ENCODE measurements at regions of chr1 and their contacts with region 1.

Region 1: DNA sequence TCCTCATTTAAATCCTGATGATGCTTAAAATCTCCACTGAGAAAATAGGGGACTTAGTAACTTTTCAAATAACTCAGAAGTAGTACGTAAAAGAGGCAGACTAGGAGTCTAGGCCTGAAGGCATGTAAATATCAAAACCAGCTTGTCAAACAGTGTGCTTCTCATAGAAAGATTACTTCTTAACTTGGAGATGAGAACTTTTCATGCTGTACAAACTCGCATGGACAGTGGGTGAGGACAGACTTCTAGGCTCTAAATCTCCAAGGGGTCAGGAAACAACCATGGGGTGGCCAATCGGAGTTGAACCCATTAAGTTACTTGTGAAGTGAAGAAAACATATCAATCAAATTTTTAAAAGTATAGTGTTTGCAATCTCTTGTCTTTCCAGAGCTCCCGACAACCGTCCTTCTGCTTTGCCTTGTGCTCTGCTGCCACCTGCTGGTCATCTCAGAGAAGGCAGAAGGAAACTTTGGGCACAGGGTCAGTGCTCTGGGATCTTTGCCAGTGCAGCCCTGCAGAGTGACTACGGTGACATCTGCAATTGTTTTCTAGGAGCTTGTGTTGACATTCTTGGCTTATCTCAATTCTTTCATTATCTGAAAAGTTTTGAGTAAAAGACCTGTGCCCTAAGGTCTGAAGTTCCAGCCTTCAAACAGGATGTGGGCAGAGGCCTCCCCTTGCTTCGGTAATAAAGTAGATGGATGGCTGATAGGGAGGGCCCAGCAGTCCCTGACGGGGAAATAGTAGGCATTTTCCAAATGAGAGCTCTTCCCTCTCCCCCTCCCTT is 105.1 kb upstream of the PDE4B start:
- DNase-seq: peak; percentile 64
- H3K27ac ChIP-seq: no peak overlapping the region
- CTCF ChIP-seq: peak; percentile 87

Region 2: DNA sequence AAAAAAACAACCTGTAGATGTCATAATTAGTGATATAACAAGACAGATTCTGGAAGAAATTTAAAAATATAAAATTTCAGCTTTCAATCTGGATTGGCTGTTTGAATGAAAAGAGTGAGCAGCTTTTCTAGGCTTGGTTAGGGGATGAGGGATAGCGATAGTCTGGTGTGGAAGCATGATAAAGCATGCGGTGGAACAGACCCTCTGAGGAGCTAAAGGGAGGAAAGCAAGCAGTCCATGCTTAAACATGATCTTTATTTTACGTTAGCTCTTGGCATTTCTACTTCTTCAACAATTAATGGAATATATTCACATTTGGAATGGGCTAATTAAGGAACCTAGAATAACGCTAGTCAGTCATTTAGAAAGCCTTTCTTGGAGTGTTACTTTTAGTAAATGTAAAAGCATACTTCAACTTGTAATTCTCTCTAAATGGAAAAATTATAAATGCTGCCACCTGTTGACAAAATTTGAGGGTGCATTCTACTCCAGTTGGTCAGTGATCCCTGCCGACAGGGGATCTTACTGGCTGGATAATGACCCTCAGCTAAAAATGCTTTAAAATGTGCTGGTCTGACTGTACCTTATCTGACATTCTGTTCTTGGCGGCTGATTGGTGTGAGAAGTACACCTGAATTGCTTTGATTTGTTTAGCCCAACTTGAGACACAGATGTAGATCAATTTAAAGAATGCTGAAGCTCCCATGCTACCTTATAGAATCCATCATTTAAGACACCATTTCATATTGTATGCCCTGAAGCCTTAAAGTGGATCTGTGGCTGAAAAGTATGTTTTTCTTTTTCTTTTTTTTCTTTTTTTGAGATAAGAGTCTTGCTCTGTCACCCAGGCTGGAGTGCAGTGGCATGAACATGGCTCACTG is 478.4 kb before region 1 on chr1:
- CTCF ChIA-PET with region 1: interaction called, 15 read pairs
- POLR2A ChIA-PET with region 1: no interaction called
- DNase-seq: peak; percentile 61
- H3K27ac ChIP-seq: no peak overlapping the region
- CTCF ChIP-seq: peak; percentile 69

Region 3: GRCh38 chr1:65703853-65704252 is 16.2 kb after region 1 on chr1:
- CTCF ChIA-PET with region 1: interaction called, 18 read pairs
- POLR2A ChIA-PET with region 1: no interaction called
- DNase-seq: no peak
- H3K27ac ChIP-seq: no peak overlapping the region
- CTCF ChIP-seq: no peak